ENCODE measurements at regions of chr12 and their contacts with region 1.

Region 1: GRCh38 chr12:3034067-3034750 is 43.0 kb upstream of the TSPAN9 start:
- DNase-seq: no peak
- H3K4me3 ChIP-seq: no peak overlapping the region
- H3K27ac ChIP-seq: no peak overlapping the region
- H3K4me1 ChIP-seq: peaks cover 0 to 8% (median 0%) of the 10 kb centered on the region in 3 donors
- H3K27me3 ChIP-seq: no peaks in the 10 kb centered on the region
- CTCF ChIP-seq: peak in 5 of 6 experiments; percentile 21 to 66 (median 54)
- POLR2A ChIP-seq: no peak

Region 2: DNA sequence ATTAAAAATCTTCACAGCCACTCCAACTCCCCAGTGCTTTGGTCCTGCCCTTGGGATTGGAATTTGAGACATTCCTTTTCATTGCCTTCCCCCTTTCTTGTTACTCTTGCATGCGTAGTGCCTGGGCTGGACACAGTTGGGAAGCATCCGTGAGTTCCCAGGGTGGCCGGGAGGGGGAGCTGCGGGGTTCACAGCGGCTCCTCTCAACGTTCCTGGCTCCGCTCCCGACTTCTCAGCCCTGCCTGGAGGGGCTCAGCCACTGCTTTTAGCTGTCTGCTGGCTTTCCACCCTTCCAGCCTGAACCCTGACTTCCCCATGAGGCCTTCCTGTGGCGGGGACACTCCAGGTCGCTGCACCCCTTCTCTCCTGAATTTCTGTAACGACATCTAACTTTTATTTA is 180.6 kb before region 1 on chr12:
- intact Hi-C with region 1: loop called (anchors 10 kb)
- DNase-seq: no peak
- H3K4me3 ChIP-seq: no peak overlapping the region
- H3K27ac ChIP-seq: no peak overlapping the region
- H3K4me1 ChIP-seq: peaks cover 0 to 4% (median 0%) of the 10 kb centered on the region in 3 donors
- H3K27me3 ChIP-seq: no peaks in the 10 kb centered on the region
- CTCF ChIP-seq: peak; percentile 39 to 80 (median 68)
- POLR2A ChIP-seq: no peak